Activated CD8-positive, alpha-beta T cell treated with anti-CD3 and anti-CD28 coated beads, Interleukin-2, amount 10 ng/mL, durations not matched to agents 7 days and 5 days (primary cell): ENCODE measurements at regions of chr4 and their contacts with region 1.

Region 1: DNA sequence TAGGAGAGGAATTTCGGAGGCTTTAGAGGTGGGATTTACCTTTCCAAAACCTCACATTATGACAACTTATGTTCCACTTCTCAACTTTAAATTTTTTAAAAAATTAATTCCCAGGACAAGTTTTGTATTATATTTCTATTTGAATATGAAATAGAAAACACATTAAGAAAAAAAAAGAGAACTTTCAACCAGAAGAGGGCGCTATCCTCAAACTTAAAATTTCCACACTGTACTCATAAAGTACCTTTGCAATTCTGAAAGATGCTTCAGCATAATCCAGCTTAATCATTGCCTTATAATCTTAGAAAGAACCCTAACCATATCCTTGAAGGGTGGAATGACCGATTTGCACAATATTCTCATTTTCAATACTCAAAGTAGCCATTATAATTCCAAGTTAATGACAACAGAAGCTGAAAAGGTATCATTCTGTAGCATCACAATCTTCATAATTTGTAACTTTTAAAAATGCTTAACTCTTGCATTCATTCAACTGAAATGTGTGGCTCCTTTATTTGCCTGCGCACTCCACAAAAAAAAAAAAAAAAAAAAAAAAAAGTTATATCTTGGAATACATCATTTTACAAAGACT is 158.0 kb downstream of the KCNIP4 start:
- DNase-seq: no peak
- ATAC-seq: no peak
- H3K4me3 Mint-ChIP-seq: no peak overlapping the region
- H3K27ac Mint-ChIP-seq: no peak overlapping the region
- H3K4me1 Mint-ChIP-seq: peaks cover 3% of the 10 kb centered on the region
- H3K27me3 Mint-ChIP-seq: no peaks in the 10 kb centered on the region

Region 2: GRCh38 chr4:22356987-22357596 is 566.6 kb after region 1 on chr4:
- CTCF ChIA-PET with region 1: interaction called, 19 read pairs
- POLR2A ChIA-PET with region 1: no interaction called
- DNase-seq: peak; percentile 22
- ATAC-seq: no peak
- H3K4me3 Mint-ChIP-seq: no peak overlapping the region
- H3K27ac Mint-ChIP-seq: no peak overlapping the region
- H3K4me1 Mint-ChIP-seq: no peaks in the 10 kb centered on the region
- H3K27me3 Mint-ChIP-seq: no peaks in the 10 kb centered on the region